WTC11 (cell line): ENCODE measurements at regions of chr14 and their contacts with region 1.

Region 1: DNA sequence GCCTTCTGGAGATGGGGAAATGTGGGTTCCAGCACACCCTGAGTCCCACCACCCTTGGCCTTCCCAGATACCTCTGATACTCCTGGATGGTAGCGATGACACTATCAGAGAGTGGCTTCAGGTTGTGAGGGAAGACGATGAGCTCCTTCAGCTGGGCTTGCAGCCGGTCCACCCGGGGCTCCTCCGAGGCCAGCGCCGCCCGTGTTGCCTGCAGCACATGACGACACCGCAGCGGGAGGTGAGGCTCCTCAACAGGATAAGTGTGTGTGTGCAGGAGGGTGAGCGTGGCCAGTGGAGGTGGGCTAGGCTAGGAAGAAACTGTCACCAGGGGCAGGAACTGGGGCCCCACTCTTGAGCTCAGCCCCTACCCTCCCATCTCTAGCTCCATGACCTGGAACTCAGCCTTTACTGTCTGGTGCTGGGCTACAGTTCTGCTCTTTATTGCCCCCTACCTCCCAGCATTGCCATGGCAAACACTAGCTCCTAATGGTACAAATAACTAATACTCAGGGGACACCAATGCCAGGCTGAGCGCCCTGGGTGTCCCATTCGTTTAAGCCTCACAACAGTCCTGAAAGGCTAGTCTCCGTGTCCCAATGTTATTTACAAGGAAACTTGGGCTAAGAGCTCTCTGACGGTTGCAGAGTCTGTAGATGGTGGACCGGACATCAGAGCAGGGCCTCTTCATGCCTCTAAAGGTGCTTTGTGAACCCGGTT is 64.1 kb downstream of the SYNE3 start:
- DNase-seq: peak; percentile 51
- ATAC-seq: peak; percentile 87
- H3K4me3 Mint-ChIP-seq: no peak overlapping the region
- H3K27ac Mint-ChIP-seq: no peak overlapping the region
- H3K4me1 Mint-ChIP-seq: no peaks in the 10 kb centered on the region
- H3K27me3 Mint-ChIP-seq: no peaks in the 10 kb centered on the region; the same call in 1 of the 2 replicates
- CTCF ChIP-seq: peak; percentile 47

Region 2: GRCh38 chr14:95515596-95516552 is 63.5 kb after region 1 on chr14:
- CTCF ChIA-PET with region 1: interaction called, 30 read pairs
- POLR2A ChIA-PET with region 1: no interaction called
- DNase-seq: peak; percentile 68
- ATAC-seq: peak; percentile 74
- H3K4me3 Mint-ChIP-seq: peak overlapping the region; percentile 68
- H3K27ac Mint-ChIP-seq: no peak overlapping the region
- H3K4me1 Mint-ChIP-seq: peaks cover 13% of the 10 kb centered on the region
- H3K27me3 Mint-ChIP-seq: peaks cover 39% of the 10 kb centered on the region
- CTCF ChIP-seq: no peak

Region 3: DNA sequence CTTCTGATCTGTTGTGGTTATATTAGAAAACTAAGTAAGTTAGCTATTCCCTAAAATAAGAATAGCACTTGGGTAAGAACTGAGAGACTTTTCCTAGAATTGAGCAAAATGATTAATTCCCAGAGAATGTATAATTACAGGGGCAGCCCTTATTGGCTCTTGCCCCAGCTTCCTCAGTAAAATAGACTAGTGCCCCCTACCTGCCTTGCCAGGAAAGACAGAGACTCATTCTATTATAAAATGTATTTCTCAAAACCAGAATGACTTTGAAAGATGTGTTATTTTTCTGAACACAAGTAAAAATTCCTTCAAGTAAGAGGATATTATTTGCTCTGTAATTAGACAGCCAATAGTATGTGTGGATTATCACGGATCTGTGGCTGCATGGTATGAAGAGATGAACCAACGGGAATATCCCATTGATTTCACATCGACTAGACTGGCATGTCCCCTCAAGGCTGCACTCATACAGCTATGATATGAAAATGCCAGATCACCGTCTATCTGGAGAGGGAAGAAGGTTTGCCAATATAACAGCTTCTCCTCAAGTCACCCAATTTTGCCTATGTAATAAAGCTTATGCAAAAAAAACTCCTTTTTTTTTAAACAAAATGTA is 75.2 kb after region 1 on chr14:
- CTCF ChIA-PET with region 1: interaction called, 41 read pairs
- POLR2A ChIA-PET with region 1: no interaction called
- DNase-seq: no peak
- ATAC-seq: peak; percentile 65
- H3K4me3 Mint-ChIP-seq: no peak overlapping the region
- H3K27ac Mint-ChIP-seq: no peak overlapping the region; the same call in 1 of the 2 replicates
- H3K4me1 Mint-ChIP-seq: peaks cover 21% of the 10 kb centered on the region
- H3K27me3 Mint-ChIP-seq: no peaks in the 10 kb centered on the region
- CTCF ChIP-seq: peak; percentile 63

Region 4: DNA sequence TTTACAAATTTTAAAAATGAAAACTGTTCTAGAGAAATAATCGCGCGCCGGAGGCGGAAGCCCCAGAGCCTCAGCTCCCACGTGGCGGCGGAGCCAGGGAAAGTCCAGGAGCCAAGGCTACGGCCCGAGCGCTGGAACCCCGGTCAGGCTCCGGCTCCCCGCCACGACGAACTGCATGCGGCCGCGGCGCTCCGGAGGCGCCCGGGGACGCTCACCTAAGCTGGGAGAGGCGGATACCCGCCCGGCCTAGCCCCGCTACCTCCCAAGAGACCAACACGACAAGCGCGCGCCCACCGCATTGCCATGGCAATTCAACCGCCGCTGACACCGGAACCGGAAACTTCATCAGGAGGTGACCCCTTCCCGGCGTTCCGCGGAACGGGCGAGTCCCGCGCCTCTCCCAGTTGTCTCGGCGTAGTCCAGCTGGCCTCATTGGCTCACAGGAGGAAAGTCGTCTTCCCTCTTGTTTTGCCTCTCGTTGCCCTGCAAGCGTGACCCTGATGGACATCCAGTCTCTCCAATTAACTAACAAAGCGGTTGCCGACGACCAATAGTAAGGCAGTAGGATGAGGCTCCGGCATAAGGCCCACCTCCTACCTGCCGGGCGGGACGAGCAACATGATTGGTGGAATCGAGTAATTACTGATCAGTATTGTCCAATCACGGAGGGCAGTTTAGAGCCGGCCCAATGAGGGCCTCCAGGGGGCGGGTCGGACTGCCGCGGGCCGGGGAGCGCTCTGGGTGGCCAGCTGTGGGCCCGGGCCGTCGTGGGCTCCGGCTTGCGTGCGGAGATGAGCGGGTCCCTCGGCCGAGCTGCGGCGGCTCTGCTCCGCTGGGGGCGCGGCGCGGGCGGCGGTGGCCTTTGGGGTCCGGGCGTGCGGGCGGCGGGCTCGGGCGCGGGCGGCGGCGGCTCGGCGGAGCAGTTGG is 82.2 kb after region 1 on chr14 and contains the start of gene GLRX5:
- CTCF ChIA-PET with region 1: interaction called, 13 read pairs
- POLR2A ChIA-PET with region 1: no interaction called
- DNase-seq: peak; percentile 97
- ATAC-seq: peak; percentile 95
- H3K4me3 Mint-ChIP-seq: peak within 1 kb of the TSS; percentile 97
- H3K27ac Mint-ChIP-seq: peak within 1 kb of the TSS; percentile 87
- H3K4me1 Mint-ChIP-seq: peaks cover 45% of the 10 kb centered on the region
- H3K27me3 Mint-ChIP-seq: no peaks in the 10 kb centered on the region
- CTCF ChIP-seq: no peak
- total RNA-seq, gene GLRX5: 72.8 to 78.3 TPM (median 76.2 TPM) in 3 replicates

Region 5: GRCh38 chr14:95547631-95548327 is 95.4 kb after region 1 on chr14:
- CTCF ChIA-PET with region 1: interaction called, 11 read pairs
- POLR2A ChIA-PET with region 1: no interaction called
- DNase-seq: no peak
- ATAC-seq: peak; percentile 78
- H3K4me3 Mint-ChIP-seq: no peak overlapping the region
- H3K27ac Mint-ChIP-seq: no peak overlapping the region
- H3K4me1 Mint-ChIP-seq: peaks cover 16% of the 10 kb centered on the region
- H3K27me3 Mint-ChIP-seq: no peaks in the 10 kb centered on the region
- CTCF ChIP-seq: no peak